ENCODE measurements at regions of chr17 and their contacts with region 1.

Region 1: GRCh38 chr17:39194089-39194984 is 3.1 kb downstream of the CACNB1 start:
- DNase-seq: no peak
- H3K4me3 ChIP-seq: no peak overlapping the region
- H3K27me3 ChIP-seq: no peaks in the 10 kb centered on the region
- CTCF ChIP-seq: peak; percentile 65

Region 2: DNA sequence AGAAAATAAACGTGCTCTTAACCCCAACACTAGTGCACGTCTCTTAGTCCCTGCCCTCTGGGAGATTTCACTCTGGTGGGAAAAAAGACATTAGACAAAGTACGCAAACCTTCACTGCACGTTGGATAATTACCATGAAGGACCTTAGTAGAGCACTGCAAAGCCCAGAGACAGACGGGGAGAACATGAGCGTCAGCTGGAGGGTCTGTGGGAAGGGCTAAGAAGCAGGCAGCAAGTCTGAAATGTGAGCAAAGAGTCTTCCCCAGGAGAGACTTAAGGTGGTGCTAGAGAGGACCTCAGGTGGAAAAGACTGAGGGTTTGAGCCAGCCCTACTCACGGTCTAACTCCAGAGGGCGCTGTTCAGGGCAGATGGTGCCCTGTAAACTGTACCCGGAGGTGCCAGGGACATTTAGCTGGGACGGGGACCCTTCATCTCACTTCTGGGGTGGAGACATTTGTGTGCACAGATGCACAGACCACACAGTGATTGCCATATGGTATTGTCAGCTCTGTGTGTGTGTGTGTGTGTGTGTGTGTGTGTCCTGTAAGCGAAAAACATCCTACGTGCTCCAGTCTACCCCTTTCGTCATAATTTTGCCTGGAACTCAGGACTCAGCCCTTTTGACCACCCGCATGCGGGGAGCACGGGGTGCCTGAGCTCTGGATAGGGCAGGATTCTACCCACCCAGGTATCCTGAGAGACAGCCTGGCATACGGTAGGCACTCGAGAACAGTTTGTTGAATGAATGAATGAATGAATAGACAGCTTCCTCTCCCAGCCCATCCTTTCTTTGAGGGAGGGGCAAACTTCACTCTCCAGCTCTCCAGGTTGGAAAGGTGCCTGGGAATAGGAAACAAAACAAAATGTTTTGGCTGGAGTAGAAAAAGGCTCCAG is 41.5 kb after region 1 on chr17:
- CTCF ChIA-PET with region 1: interaction called, 18 read pairs
- POLR2A ChIA-PET with region 1: no interaction called
- DNase-seq: no peak
- H3K4me3 ChIP-seq: no peak overlapping the region
- H3K27me3 ChIP-seq: peaks cover 2% of the 10 kb centered on the region; the same call in 1 of the 2 replicates
- CTCF ChIP-seq: peak; percentile 71